Heart right ventricle (tissue), 16 donors: ENCODE measurements at regions of chr2 and their contacts with region 1.

Region 1: DNA sequence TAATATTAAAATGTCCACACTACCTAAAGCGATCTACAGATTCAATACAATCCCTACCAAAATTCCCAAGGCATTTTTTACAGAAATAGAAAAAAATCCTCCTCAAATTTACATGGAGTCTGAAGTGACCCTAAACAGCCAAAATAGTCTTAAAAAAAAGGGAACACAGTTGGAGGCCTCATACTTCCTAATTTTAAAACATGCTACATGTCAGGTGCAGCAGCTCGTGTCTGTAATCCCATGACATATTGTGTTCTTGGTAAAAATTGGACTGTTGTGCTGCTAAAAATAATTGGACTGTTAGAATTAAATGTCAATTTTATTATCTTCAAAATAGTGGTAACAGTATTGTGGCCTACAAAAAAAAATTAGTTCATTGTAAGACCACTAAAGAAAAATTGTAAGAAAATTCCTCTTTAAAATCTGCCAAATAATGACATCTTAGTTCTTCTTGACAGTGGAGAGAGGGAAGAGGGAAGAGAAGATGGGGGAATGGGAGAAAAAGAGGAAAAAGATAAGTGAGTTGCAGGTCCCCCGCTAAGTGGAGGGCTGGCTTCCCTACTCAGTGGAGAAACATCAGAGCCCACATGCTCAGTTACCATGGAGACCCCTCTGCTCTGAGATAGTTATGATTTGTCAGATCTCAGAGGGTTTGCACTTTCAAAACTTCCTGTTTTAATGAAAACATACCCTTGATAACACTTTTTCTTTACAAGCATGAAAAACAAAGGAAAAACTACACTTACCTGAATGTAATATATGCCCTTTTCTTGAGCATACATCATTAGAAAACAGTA is 46.5 kb downstream of the UNC50 start:
- DNase-seq: no peak
- ATAC-seq: no peak
- H3K4me3 ChIP-seq: no peak overlapping the region
- H3K27ac ChIP-seq: peak overlapping the region in 1 of 10 donors; percentile 32
- H3K4me1 ChIP-seq: peaks cover 0 to 40% (median 0%) of the 10 kb centered on the region in 9 donors
- H3K27me3 ChIP-seq: no peaks in the 10 kb centered on the region
- CTCF ChIP-seq: no peak

Region 2: DNA sequence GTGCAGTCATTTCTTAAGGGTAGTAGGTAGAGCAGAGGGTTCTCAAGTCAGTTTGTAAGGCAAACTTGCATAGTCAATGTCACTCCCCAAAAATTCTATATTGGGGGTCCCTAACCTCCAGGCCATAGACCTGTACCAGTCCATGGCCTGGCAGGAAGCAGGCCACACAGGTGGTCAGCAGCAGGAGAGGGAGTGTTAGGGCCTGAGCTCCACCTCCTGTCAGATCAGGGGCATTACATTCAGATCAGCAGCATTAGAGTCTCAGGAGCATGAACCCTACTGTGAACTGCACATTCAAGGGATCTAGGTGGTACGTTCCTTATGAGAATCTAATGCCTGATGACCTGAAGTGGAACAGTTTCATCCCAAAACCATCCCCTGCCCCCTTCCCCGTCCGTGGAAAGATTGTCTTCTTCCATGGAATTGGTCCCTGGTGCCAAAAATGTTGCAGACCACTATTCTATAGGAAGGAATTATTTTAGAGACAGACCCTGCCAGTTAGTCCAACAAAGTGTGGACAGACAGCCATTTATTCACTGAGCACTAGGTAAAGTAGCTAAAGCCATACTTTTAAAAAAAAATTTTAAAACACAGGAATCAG is 53.3 kb before region 1 on chr2:
- intact Hi-C with region 1: no loop called
- DNase-seq: no peak
- ATAC-seq: peak in 7 of 8 donors; percentile 62 to 84 (median 73)
- H3K4me3 ChIP-seq: no peak overlapping the region
- H3K27ac ChIP-seq: no peak overlapping the region
- H3K4me1 ChIP-seq: peaks cover 2 to 27% (median 20%) of the 10 kb centered on the region in 9 donors
- H3K27me3 ChIP-seq: no peaks in the 10 kb centered on the region
- CTCF ChIP-seq: peak; percentile 36 to 69 (median 63)

Region 3: DNA sequence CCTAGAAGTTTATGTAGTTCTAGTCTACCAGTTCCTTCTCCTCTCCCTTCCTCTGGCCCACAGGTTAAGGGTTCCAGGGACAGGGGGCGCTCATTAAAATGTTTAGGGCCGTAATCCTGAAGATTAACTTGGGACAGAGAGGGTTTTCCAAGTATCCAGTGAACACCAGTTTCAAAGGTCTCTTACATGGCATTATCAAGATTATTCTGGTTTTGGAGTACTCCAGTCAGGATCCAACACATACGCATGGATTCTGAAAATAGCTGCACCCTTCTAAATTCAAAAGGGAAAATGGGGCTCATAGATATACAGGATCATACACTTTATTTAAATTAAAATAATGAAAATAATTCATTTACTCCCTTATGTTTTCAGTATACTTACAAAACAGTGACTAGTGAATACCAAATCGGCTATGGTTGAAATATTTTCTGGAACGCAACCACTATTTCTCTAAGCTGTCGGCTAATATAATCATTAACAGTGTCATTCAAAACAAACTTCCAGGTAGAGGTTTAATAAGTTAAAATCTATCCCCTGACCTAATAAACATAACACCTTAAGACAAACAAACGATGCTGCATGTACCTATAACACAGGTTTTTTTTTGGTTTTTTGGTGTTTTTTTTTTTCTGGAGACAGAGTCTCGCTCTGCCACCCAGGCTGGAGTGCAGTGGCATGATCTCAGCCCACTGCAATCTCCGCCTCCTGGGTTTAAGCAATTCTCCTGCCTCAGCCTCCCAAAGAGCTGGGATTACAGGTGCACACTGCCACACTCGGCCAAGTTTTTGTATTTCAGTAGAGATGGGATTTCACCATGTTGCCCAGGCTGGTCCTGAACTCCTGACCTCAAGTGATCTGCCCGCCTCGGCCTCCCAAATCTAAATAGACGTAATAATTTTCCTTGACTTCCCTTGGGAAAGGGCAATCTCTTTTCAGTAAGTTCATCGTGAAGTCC is 31.3 kb after region 1 on chr2:
- intact Hi-C with region 1: no loop called
- DNase-seq: no peak
- ATAC-seq: no peak
- H3K4me3 ChIP-seq: no peak overlapping the region
- H3K27ac ChIP-seq: no peak overlapping the region
- H3K4me1 ChIP-seq: peaks cover 0 to 23% (median 5%) of the 10 kb centered on the region in 9 donors
- H3K27me3 ChIP-seq: no peaks in the 10 kb centered on the region
- CTCF ChIP-seq: no peak

Region 4: GRCh38 chr2:98749066-98749450 is 94.2 kb after region 1 on chr2:
- intact Hi-C with region 1: loop called in 1 of 10 experiments (anchors 10 kb)
- DNase-seq: peak in 1 of 2 donors; percentile 19
- ATAC-seq: peak; percentile 64 to 87 (median 76)
- H3K4me3 ChIP-seq: no peak overlapping the region
- H3K27ac ChIP-seq: peak overlapping the region in 3 of 10 donors; percentile 12 to 73 (median 24)
- H3K4me1 ChIP-seq: peaks cover 0 to 42% (median 7%) of the 10 kb centered on the region in 9 donors
- H3K27me3 ChIP-seq: no peaks in the 10 kb centered on the region
- CTCF ChIP-seq: no peak

Region 5: GRCh38 chr2:98822301-98823164 is 167.6 kb after region 1 on chr2:
- intact Hi-C with region 1: loop called in 1 of 10 experiments (anchors 5 kb)
- DNase-seq: peak; percentile 71 to 75
- ATAC-seq: peak; percentile 78 to 88 (median 82)
- H3K4me3 ChIP-seq: peak overlapping the region; percentile 24 to 64 (median 57)
- H3K27ac ChIP-seq: peak overlapping the region; percentile 83 to 97 (median 94)
- H3K4me1 ChIP-seq: peaks cover 6 to 75% (median 53%) of the 10 kb centered on the region in 9 donors
- H3K27me3 ChIP-seq: peaks cover 0 to 17% (median 4%) of the 10 kb centered on the region in 7 donors
- CTCF ChIP-seq: peak; percentile 6 to 60 (median 37)